ENCODE measurements at regions of chr4 and their contacts with region 1.

Region 1: GRCh38 chr4:54683616-54684346 is 26.0 kb downstream of the KIT start:
- DNase-seq: peak; percentile 81
- H3K4me3 Mint-ChIP-seq: no peak overlapping the region
- H3K27ac Mint-ChIP-seq: no peak overlapping the region
- H3K4me1 Mint-ChIP-seq: peaks cover 20% of the 10 kb centered on the region
- H3K27me3 Mint-ChIP-seq: no peaks in the 10 kb centered on the region

Region 2: GRCh38 chr4:54754394-54754793 is 70.6 kb after region 1 on chr4:
- CTCF ChIA-PET with region 1: no interaction called
- intact Hi-C with region 1: no loop called
- DNase-seq: no peak
- H3K4me3 Mint-ChIP-seq: no peak overlapping the region
- H3K27ac Mint-ChIP-seq: no peak overlapping the region
- H3K4me1 Mint-ChIP-seq: no peaks in the 10 kb centered on the region
- H3K27me3 Mint-ChIP-seq: no peaks in the 10 kb centered on the region

Region 3: GRCh38 chr4:54840992-54841768 is 157.4 kb after region 1 on chr4:
- CTCF ChIA-PET with region 1: no interaction called
- intact Hi-C with region 1: loop called (anchors 2 kb)
- DNase-seq: no peak
- H3K4me3 Mint-ChIP-seq: no peak overlapping the region
- H3K27ac Mint-ChIP-seq: no peak overlapping the region
- H3K4me1 Mint-ChIP-seq: peaks cover 2% of the 10 kb centered on the region
- H3K27me3 Mint-ChIP-seq: no peaks in the 10 kb centered on the region

Region 4: GRCh38 chr4:54961357-54961975 is 277.7 kb after region 1 on chr4:
- CTCF ChIA-PET with region 1: interaction called, 17 read pairs
- intact Hi-C with region 1: loop called (anchors 1 kb)
- DNase-seq: peak; percentile 15
- H3K4me3 Mint-ChIP-seq: no peak overlapping the region
- H3K27ac Mint-ChIP-seq: no peak overlapping the region
- H3K4me1 Mint-ChIP-seq: peaks cover 26% of the 10 kb centered on the region
- H3K27me3 Mint-ChIP-seq: no peaks in the 10 kb centered on the region

Measured in activated naive CD4-positive, alpha-beta T cell treated with anti-CD3 and anti-CD28 coated beads for 36 hours (primary cell).